CD8-positive, alpha-beta memory T cell (primary cell): ENCODE measurements at regions of chr7 and their contacts with region 1.

Region 1: DNA sequence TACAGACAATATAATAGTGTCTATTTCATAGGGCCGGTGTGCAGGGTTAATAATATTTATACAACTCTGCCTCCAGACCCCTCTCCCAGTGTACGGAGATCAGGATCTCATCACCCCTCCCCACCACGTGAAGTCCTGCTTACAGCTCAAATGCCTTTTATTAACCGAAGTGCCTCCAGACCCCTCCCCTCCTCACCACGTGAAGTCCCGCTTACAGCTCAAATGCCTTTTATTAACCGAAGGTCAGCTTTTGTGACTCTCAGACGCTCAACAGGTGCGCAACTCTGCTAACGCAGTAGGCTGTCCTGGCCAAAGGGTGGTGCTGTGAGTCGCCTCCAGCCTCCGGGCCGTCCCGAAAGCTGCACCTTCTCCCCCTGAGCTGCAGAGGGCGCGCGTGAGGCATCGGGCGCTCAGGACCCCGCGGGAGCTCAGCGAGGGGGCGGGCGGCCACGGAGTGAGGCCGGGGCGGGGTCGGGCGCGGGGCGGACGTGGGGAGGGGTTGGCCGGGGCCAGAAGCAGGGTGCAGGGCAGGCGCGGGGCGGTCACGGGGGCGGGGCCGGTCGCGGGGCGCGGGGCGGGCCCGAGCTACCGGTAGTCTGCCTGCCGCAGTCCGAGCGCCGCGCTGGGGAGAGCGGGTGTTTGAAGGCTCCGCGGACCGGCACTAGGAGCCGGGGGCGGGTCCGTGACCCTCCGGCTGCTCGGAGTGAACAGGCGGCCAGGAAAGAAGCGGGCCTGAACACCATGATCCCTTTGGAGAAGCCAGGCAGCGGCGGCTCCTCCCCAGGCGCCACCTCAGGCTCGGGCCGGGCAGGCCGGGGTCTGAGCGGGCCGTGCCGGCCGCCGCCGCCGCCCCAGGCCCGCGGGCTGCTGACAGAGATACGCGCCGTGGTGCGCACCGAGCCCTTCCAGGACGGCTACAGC is at the start of gene STK17A:
- DNase-seq: peak; percentile 91 to 96 (median 95)
- H3K4me3 ChIP-seq: peak within 1 kb of the TSS; percentile 96
- H3K4me3 Mint-ChIP-seq: peak within 1 kb of the TSS; percentile 95 to 99 (median 96)
- H3K27ac ChIP-seq: peak within 1 kb of the TSS; percentile 94
- H3K27ac Mint-ChIP-seq: peak within 1 kb of the TSS; percentile 95 to 100 (median 96)
- H3K4me1 ChIP-seq: peaks cover 12% of the 10 kb centered on the region
- H3K4me1 Mint-ChIP-seq: peaks cover 17 to 30% (median 22%) of the 10 kb centered on the region in 3 donors
- H3K27me3 ChIP-seq: no peaks in the 10 kb centered on the region
- H3K27me3 Mint-ChIP-seq: peaks cover 0 to 7% of the 10 kb centered on the region in 2 donors
- total RNA-seq, gene STK17A: 45.5 to 45.8 TPM

Region 2: DNA sequence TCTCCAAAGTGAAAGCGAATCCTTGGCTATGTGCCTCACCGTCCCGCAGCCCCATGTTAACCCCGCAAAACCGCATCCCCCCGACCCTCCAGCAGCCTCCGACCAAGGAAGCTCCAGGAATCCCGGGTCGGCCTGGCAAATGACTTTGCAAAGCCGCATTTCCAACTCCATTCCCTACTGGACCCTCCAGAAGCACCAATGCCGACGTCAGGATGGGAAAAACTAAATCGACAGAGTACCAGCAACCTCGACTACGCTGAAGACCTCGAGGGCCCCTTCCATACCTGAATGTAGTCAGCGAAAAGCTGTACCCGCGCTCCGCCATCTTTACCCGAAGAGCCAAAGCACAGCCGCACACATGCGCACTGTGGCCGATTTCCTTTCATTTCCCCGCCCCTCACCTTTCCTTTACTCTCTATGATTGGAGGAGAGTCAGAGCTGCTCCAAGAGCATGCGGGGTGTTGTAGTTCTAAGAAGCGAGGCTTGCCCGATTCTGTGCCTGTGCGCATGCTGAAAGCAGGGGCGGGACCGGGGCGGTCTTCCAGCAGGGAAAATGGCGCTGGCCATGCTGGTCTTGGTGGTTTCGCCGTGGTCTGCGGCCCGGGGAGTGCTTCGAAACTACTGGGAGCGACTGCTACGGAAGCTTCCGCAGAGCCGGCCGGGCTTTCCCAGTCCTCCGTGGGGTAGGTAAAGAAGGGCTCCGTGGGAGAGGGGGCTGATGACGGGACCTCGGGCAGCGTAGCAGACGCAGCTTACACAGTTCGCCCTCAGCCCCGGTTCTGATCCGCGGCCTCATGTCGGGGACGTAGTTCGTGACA is 650.7 kb before region 1 on chr7 and contains the starts of genes MRPL32 and PSMA2:
- CTCF ChIA-PET with region 1: interaction called, 15 read pairs
- POLR2A ChIA-PET with region 1: interaction called, 6 read pairs
- DNase-seq: peak; percentile 91 to 97 (median 94)
- H3K4me3 ChIP-seq: peak within 1 kb of the TSS; percentile 98
- H3K4me3 Mint-ChIP-seq: peak within 1 kb of the TSS; percentile 95 to 100 (median 99)
- H3K27ac ChIP-seq: peak within 1 kb of the TSS; percentile 88
- H3K27ac Mint-ChIP-seq: peak within 1 kb of the TSS; percentile 83 to 100 (median 98)
- H3K4me1 ChIP-seq: peaks cover 49% of the 10 kb centered on the region
- H3K4me1 Mint-ChIP-seq: peaks cover 65 to 87% (median 80%) of the 10 kb centered on the region in 3 donors
- H3K27me3 ChIP-seq: no peaks in the 10 kb centered on the region
- H3K27me3 Mint-ChIP-seq: no peaks in the 10 kb centered on the region
- total RNA-seq, gene MRPL32: 74.6 to 79.5 TPM
- total RNA-seq, gene PSMA2: 176 to 179 TPM

Region 3: GRCh38 chr7:43294080-43294630 is 288.6 kb before region 1 on chr7:
- CTCF ChIA-PET with region 1: no interaction called
- POLR2A ChIA-PET with region 1: no interaction called
- DNase-seq: no peak
- H3K4me3 ChIP-seq: no peak overlapping the region
- H3K4me3 Mint-ChIP-seq: no peak overlapping the region
- H3K27ac ChIP-seq: no peak overlapping the region
- H3K27ac Mint-ChIP-seq: no peak overlapping the region
- H3K4me1 ChIP-seq: no peaks in the 10 kb centered on the region
- H3K4me1 Mint-ChIP-seq: no peaks in the 10 kb centered on the region
- H3K27me3 ChIP-seq: no peaks in the 10 kb centered on the region
- H3K27me3 Mint-ChIP-seq: peaks cover 9 to 18% of the 10 kb centered on the region in 2 donors

Region 4: DNA sequence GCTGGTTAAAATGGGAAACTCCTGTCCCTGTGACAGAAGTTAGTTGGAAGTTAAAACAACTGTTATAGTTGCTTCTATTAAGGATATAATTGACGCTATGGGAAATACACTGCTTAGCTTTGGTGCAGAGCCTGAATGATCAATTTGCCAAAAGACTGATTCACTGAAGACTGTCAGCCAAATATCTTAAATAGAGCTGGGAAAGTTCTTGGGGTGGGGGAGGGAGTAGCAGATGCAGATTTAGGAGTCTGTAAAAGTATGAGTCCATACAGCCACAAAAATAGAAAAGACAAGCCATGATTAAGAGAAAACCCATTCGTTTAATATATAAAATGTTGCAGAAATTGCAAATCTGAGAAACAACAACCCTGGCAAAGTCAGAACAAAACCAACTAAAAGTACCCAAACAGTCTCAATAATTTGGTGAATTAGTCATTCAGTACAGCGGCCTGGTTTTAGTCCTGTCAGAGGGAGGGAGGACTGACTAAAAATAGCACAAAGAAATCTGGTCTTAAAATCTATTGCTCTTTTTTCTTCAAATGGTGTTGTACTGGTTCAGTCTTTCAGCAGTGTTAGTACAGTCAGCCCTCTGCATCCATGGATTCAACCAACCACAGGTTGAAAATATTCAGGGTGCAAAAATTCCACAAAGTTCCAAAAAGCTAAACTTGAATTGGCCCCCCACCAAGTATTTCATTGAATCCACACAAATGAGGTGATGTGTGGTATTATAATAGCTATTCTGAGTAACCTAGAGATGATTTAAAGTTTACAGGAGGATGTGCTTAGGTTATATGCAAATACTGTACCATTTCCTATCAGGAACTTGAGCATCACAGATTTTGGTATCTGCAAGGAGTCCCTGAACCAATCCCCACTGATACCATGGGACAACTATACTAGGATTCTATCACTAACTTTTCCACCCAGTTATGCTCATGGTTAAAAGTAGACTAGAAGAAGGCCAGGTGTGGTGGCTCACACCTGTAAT is 30.1 kb after region 1 on chr7:
- CTCF ChIA-PET with region 1: interaction called, 23 read pairs
- POLR2A ChIA-PET with region 1: interaction called, 8 read pairs
- DNase-seq: no peak
- H3K4me3 ChIP-seq: no peak overlapping the region
- H3K4me3 Mint-ChIP-seq: peak overlapping the region in 6 of 7 donors; percentile 29 to 59 (median 46)
- H3K27ac ChIP-seq: no peak overlapping the region
- H3K27ac Mint-ChIP-seq: peak overlapping the region; percentile 66 to 92 (median 77)
- H3K4me1 ChIP-seq: peaks cover 90% of the 10 kb centered on the region
- H3K4me1 Mint-ChIP-seq: peaks cover 43 to 82% (median 65%) of the 10 kb centered on the region in 3 donors
- H3K27me3 ChIP-seq: no peaks in the 10 kb centered on the region
- H3K27me3 Mint-ChIP-seq: no peaks in the 10 kb centered on the region

Region 5: GRCh38 chr7:43631559-43631958 is 48.8 kb after region 1 on chr7:
- CTCF ChIA-PET with region 1: interaction called, 44 read pairs
- POLR2A ChIA-PET with region 1: interaction called, 16 read pairs
- DNase-seq: peak in 1 of 5 donors; percentile 54
- H3K4me3 ChIP-seq: no peak overlapping the region
- H3K4me3 Mint-ChIP-seq: peak overlapping the region; percentile 12 to 75 (median 57)
- H3K27ac ChIP-seq: no peak overlapping the region
- H3K27ac Mint-ChIP-seq: peak overlapping the region; percentile 74 to 96 (median 89)
- H3K4me1 ChIP-seq: peaks cover 90% of the 10 kb centered on the region
- H3K4me1 Mint-ChIP-seq: peaks cover 20 to 100% (median 88%) of the 10 kb centered on the region in 3 donors
- H3K27me3 ChIP-seq: no peaks in the 10 kb centered on the region
- H3K27me3 Mint-ChIP-seq: peaks cover 0 to 1% of the 10 kb centered on the region in 2 donors

Region 6: GRCh38 chr7:43655584-43655983 is 72.8 kb after region 1 on chr7:
- CTCF ChIA-PET with region 1: interaction called, 69 read pairs
- POLR2A ChIA-PET with region 1: interaction called, 48 read pairs
- DNase-seq: no peak
- H3K4me3 ChIP-seq: no peak overlapping the region
- H3K4me3 Mint-ChIP-seq: peak overlapping the region in 1 of 7 donors; percentile 14
- H3K27ac ChIP-seq: no peak overlapping the region
- H3K27ac Mint-ChIP-seq: peak overlapping the region in 3 of 8 donors; percentile 6 to 65 (median 14)
- H3K4me1 ChIP-seq: peaks cover 67% of the 10 kb centered on the region
- H3K4me1 Mint-ChIP-seq: peaks cover 70 to 91% (median 90%) of the 10 kb centered on the region in 3 donors
- H3K27me3 ChIP-seq: no peaks in the 10 kb centered on the region
- H3K27me3 Mint-ChIP-seq: peaks cover 0 to 2% of the 10 kb centered on the region in 2 donors

Region 7: GRCh38 chr7:43693687-43694398 is 111.1 kb after region 1 on chr7:
- CTCF ChIA-PET with region 1: interaction called, 319 read pairs
- POLR2A ChIA-PET with region 1: interaction called, 89 read pairs
- DNase-seq: no peak
- H3K4me3 ChIP-seq: no peak overlapping the region
- H3K4me3 Mint-ChIP-seq: no peak overlapping the region
- H3K27ac ChIP-seq: no peak overlapping the region
- H3K27ac Mint-ChIP-seq: no peak overlapping the region
- H3K4me1 ChIP-seq: peaks cover 44% of the 10 kb centered on the region
- H3K4me1 Mint-ChIP-seq: peaks cover 14 to 39% (median 30%) of the 10 kb centered on the region in 3 donors
- H3K27me3 ChIP-seq: no peaks in the 10 kb centered on the region
- H3K27me3 Mint-ChIP-seq: no peaks in the 10 kb centered on the region

Region 8: GRCh38 chr7:43721193-43721806 is 138.5 kb after region 1 on chr7:
- CTCF ChIA-PET with region 1: interaction called, 116 read pairs
- POLR2A ChIA-PET with region 1: interaction called, 12 read pairs
- DNase-seq: peak in 2 of 5 donors; percentile 46 to 47
- H3K4me3 ChIP-seq: no peak overlapping the region
- H3K4me3 Mint-ChIP-seq: no peak overlapping the region
- H3K27ac ChIP-seq: no peak overlapping the region
- H3K27ac Mint-ChIP-seq: peak overlapping the region in 1 of 8 donors; percentile 90
- H3K4me1 ChIP-seq: no peaks in the 10 kb centered on the region
- H3K4me1 Mint-ChIP-seq: peaks cover 34 to 67% (median 43%) of the 10 kb centered on the region in 3 donors
- H3K27me3 ChIP-seq: no peaks in the 10 kb centered on the region
- H3K27me3 Mint-ChIP-seq: no peaks in the 10 kb centered on the region